Right ventricle myocardium inferior (tissue), 1 donor: ENCODE measurements at regions of chr2 and their contacts with region 1.

Region 1: DNA sequence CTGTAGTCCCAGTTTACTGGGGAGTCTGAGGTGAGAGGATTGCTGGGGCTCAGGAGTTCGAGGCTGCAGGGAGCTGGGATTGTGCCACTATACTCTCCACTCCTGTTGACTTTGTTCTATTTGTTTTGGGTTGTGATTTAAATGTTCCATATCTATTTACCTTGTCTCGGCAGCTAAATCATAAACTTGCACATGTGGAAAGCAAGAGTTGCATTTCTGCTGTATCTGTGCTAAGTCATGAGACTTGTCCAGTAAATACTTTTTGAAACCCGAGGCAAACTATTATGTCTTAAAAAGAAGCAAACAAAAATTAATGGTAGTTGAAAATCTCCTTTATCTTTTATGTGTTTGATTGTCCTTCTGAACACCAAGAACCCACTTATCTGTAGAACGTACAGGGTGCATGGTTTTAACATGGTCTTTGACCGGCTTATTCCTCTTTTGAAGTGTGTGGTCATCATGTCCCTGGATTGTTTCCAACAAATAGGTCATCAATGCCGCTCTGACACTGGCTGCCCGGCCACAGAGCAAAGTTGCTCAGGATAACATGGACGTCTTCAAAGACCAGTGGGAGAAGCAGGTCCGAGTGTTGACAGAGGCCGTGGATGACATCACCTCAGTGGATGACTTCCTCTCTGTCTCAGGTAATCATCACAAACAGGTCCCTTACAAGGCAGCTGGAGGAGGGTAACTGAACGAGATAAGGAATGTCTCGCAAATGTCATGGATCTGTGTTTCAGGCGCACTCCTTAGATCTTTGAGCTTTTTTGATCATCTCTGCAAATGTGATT is 241.1 kb upstream of the LRRTM1 start:
- DNase-seq: no peak
- ATAC-seq: no peak

Region 2: DNA sequence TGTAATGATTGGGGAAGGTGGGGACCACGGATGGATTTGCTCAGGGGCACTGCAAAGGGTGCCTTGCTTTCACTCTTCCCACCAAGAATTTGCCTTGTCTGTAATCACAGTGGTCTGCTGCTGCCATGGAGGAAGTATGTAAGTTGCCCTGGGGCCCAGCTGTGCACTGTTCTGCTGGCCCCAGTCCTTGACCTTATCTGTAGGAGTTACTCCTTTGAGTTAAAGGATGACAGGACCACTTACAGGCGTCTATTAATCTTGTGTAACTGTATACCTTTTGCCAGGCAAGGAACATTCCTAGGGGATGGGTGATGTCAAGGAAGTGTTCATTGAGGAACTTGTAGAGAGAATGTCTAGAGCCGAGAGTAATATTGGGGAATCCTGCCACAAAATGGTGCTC is 28.3 kb before region 1 on chr2:
- intact Hi-C with region 1: loop called (anchors 1 kb)
- DNase-seq: no peak
- ATAC-seq: no peak